Body of pancreas (tissue), 4 donors: ENCODE measurements at regions of chr7 and their contacts with region 1.

Region 1: DNA sequence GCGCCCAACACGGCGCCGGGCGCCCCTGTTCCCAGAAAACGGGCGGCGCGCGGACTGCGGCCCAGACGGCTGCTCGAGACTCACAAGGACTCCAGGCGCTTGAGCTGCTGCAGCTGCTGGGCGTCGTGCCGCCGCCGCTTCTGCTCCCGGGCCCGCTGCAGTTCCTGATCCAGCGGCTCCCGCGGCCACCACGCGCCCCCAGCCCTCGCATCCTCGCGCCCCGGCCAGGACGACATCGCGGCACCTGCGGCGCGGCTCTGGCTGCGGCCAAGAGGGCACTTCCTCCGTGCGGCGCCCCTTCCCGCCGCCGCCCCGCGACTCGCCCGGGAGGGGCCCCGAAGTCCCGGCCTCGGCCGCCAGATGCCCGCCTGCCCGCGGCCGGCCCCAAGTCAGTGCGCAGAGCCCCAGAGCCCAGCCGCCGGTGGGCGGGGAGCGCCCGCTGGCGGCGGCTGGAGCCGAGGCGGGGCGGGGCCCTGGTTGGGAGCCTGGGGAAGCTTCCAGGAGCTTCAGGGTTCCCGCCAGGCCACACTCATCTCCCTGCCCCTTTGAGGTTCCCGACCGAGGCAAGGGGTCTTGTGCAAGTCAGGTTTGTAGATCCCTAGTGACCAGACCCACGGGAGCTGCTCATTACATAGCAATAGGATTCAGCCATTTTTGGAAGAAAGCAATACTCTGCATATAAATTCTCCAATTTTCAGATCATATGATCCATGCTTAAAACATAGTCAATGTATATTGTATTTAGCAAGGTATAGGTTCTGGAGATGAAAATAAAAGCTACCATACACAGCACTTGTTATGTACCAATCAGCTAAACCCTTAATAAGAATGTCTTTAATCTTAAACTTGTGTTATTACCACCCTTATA is 14.2 kb upstream of the FKBP9 start:
- DNase-seq: peak; percentile 76 to 86 (median 80)
- ATAC-seq: peak; percentile 95
- H3K4me3 ChIP-seq: peak overlapping the region; percentile 58 to 63
- H3K27ac ChIP-seq: peak overlapping the region; percentile 62 to 94 (median 88)
- H3K4me1 ChIP-seq: peaks cover 24% of the 10 kb centered on the region
- H3K27me3 ChIP-seq: no peaks in the 10 kb centered on the region
- CTCF ChIP-seq: peak; percentile 30 to 87 (median 70)
- POLR2A ChIP-seq: peak; percentile 50 to 55 (median 52)

Region 2: GRCh38 chr7:32410545-32410944 is 532.5 kb before region 1 on chr7:
- intact Hi-C with region 1: no loop called
- DNase-seq: no peak
- ATAC-seq: no peak
- H3K4me3 ChIP-seq: no peak overlapping the region
- H3K27ac ChIP-seq: no peak overlapping the region
- H3K4me1 ChIP-seq: no peaks in the 10 kb centered on the region
- H3K27me3 ChIP-seq: no peaks in the 10 kb centered on the region
- CTCF ChIP-seq: no peak
- POLR2A ChIP-seq: no peak

Region 3: DNA sequence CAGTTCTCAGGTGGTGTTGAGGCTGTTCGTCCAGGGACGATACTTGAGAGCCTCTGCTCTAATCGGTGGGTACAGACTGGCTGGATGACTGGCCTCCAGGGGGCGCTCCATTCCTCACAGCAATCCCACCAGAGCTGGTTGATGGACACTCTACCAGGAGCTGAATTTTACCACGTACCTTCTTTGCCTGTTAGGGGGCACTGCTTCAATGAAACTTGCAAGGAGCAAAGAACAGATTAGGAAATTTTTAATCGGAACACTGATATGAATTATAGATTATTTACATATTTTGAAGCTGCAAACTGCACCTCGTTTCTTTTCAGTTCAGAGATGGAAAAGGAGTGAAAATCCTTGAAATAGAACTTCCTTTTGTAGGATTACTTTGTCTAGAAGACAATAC is 96.3 kb before region 1 on chr7:
- intact Hi-C with region 1: loop called (anchors 5 kb)
- DNase-seq: peak; percentile 88 to 95 (median 90)
- ATAC-seq: peak; percentile 97
- H3K4me3 ChIP-seq: no peak overlapping the region
- H3K27ac ChIP-seq: no peak overlapping the region
- H3K4me1 ChIP-seq: peaks cover 6% of the 10 kb centered on the region
- H3K27me3 ChIP-seq: no peaks in the 10 kb centered on the region
- CTCF ChIP-seq: peak; percentile 79 to 95 (median 93)
- POLR2A ChIP-seq: no peak

Region 4: GRCh38 chr7:33050535-33051318 is 107.7 kb after region 1 on chr7:
- intact Hi-C with region 1: loop called (anchors 10 kb)
- DNase-seq: peak in 3 of 4 donors; percentile 33 to 54 (median 35)
- ATAC-seq: peak; percentile 82
- H3K4me3 ChIP-seq: no peak overlapping the region
- H3K27ac ChIP-seq: peak overlapping the region in 3 of 4 donors; percentile 38 to 53 (median 49)
- H3K4me1 ChIP-seq: peaks cover 40% of the 10 kb centered on the region
- H3K27me3 ChIP-seq: no peaks in the 10 kb centered on the region
- CTCF ChIP-seq: peak; percentile 25 to 78 (median 65)
- POLR2A ChIP-seq: no peak